ENCODE measurements at regions of chr17 and their contacts with region 1.

Region 1: GRCh38 chr17:1573916-1574696 is 11.5 kb upstream of the PITPNA start:
- DNase-seq: peak; percentile 76 to 87
- H3K4me3 ChIP-seq: peak overlapping the region in 1 of 3 donors; percentile 20
- H3K27ac ChIP-seq: peak overlapping the region; percentile 82 to 88
- H3K4me1 ChIP-seq: peaks cover 8 to 23% of the 10 kb centered on the region in 2 donors
- H3K27me3 ChIP-seq: no peaks in the 10 kb centered on the region
- CTCF ChIP-seq: peak; percentile 66 to 92 (median 90)
- POLR2A ChIP-seq: no peak

Region 2: DNA sequence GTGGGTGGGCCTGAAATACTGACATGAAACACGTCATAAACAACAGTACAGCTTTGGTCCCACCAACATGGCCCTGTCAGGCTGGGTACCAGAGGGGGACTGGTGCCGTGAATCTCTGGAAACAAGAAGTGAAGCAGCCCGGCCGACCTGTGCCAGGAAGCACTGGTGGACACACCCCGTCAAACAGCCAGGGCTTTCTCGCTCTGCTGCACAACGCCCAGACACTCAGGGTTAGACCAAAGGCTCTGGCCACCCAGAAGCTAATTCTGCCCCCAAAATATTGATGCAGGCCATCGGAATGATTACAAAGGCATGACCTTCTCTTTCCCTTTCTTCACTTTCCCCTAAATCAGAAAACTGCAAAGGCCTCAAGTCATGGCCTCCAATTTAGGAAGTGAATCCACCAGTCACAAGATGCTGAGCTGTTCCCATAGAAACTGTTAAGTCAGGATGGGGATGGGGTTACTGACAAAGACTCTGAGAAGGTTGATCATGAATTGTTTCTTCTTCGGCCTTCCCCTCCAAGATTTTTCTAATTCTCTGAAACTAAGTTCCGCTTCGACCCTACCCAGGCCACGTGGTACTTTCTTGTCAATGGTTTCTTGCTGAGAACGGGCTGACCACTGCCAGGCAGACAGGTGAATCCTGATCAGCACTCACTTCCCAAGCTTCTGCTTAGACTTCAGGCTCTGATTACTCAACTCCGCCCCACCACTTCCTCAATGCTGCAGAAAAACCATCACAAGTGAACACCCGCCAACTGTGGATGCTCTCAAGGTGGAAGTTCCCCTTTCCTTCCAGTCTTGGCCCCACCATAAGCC is 18.2 kb before region 1 on chr17:
- intact Hi-C with region 1: no loop called
- DNase-seq: no peak
- H3K4me3 ChIP-seq: no peak overlapping the region
- H3K27ac ChIP-seq: no peak overlapping the region
- H3K4me1 ChIP-seq: peaks cover 0 to 4% of the 10 kb centered on the region in 2 donors
- H3K27me3 ChIP-seq: no peaks in the 10 kb centered on the region
- CTCF ChIP-seq: no peak
- POLR2A ChIP-seq: no peak

Region 3: DNA sequence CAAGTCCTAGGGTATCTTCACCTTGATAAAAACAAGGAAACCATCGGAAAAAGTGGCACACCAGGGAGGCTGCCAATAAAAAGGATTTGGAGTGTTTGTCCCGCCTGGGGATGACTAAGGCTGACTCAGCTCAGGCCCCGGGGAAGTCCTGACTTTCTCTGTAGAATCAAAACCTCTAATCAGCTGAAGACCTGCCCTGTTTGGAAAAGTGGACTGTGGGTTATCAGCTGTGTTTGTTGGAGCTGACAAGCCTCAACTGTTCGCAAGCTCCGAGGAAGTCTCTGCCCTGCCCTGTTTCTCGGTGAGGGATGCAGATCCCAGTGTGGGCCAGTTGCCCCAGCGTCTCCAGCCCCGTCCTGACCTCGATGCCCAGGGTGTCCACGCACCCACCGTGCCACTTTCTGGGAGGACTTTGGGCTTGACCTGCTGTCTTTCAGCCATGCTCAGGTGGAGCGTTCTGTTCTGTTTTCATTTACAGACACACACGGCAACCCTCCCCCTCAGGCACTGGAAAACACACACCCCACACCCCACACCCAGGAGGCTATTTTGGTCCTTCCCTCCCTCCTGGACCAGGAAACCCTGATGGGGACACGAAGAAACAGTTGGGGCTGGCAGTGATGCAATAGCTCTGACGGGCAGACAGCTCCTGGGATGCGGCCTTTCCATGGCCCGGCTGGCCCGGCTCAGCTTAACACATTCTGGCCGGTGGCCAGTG is 16.1 kb after region 1 on chr17:
- intact Hi-C with region 1: loop called (anchors 1 kb)
- DNase-seq: no peak
- H3K4me3 ChIP-seq: no peak overlapping the region
- H3K27ac ChIP-seq: peak overlapping the region; percentile 37 to 54
- H3K4me1 ChIP-seq: no peaks in the 10 kb centered on the region
- H3K27me3 ChIP-seq: no peaks in the 10 kb centered on the region
- CTCF ChIP-seq: no peak
- POLR2A ChIP-seq: no peak

Region 4: GRCh38 chr17:1628856-1629646 is 54.9 kb after region 1 on chr17:
- intact Hi-C with region 1: loop called (anchors 5 kb)
- DNase-seq: peak; percentile 95 to 96
- H3K4me3 ChIP-seq: peak overlapping the region; percentile 63 to 84 (median 79)
- H3K27ac ChIP-seq: peak overlapping the region; percentile 90 to 99
- H3K4me1 ChIP-seq: peaks cover 0 to 12% of the 10 kb centered on the region in 2 donors
- H3K27me3 ChIP-seq: no peaks in the 10 kb centered on the region
- CTCF ChIP-seq: no peak
- POLR2A ChIP-seq: peak; percentile 8

Measured in breast epithelium (tissue), 4 donors.